Body of pancreas (tissue), 4 donors: ENCODE measurements at regions of chr1 and their contacts with region 1.

Region 1: DNA sequence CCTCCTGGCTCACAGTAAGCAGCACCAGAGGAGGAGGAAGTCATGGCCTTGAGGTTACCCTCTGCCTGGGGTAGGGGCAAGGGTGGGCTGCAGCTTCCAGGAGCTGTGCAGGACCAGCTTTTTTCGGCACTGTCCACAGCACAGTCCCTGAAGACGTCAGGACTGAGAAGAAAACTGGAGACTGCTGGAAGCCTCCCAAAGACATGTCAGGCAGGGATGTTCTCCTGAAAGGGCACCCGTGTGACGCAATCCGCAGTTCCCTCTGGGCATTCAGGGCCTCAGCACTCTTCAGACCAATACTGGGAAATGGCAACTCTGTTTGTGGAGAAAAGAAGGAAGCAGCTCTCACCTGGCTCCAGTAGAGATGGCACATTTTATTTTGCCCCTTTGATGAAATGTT is 64.8 kb upstream of the TENT5C start:
- DNase-seq: peak; percentile 49 to 71 (median 69)
- ATAC-seq: peak; percentile 63
- H3K4me3 ChIP-seq: no peak overlapping the region
- H3K27ac ChIP-seq: peak overlapping the region in 3 of 4 donors; percentile 42 to 52 (median 51)
- H3K4me1 ChIP-seq: peaks cover 32% of the 10 kb centered on the region
- H3K27me3 ChIP-seq: no peaks in the 10 kb centered on the region
- CTCF ChIP-seq: no peak
- POLR2A ChIP-seq: no peak

Region 2: DNA sequence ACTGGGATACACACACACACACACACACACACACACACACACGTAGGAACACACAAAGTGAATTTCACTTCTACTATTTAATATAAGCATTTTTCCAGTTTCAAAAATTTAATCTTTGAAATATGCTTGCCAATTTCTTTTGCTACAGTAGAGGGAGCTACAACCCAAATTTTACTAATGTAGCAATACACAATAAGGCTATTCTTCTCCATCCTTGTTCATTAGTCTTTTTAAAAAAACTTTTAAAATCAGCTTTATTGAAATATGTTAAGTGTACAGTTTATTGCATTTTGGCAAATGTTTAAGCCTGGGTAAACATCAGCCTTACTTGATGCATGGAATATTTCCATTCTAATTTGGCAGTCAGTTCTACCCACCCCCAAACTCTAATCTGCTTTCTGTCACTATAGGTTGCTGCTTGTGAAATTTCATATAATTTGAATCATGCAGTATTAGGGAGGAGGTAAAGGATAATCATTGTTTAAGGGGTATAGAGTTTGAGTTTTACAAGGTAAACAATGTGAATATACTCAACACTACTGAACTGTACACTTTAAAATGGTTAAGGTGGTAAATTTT is 28.2 kb before region 1 on chr1:
- intact Hi-C with region 1: no loop called
- DNase-seq: no peak
- ATAC-seq: peak; percentile 55
- H3K4me3 ChIP-seq: no peak overlapping the region
- H3K27ac ChIP-seq: no peak overlapping the region
- H3K4me1 ChIP-seq: no peaks in the 10 kb centered on the region
- H3K27me3 ChIP-seq: no peaks in the 10 kb centered on the region
- CTCF ChIP-seq: peak; percentile 12 to 83 (median 72)
- POLR2A ChIP-seq: no peak

Region 3: GRCh38 chr1:117664314-117664713 is 123.3 kb after region 1 on chr1:
- intact Hi-C with region 1: loop called (anchors 10 kb)
- DNase-seq: no peak
- ATAC-seq: no peak
- H3K4me3 ChIP-seq: no peak overlapping the region
- H3K27ac ChIP-seq: no peak overlapping the region
- H3K4me1 ChIP-seq: no peaks in the 10 kb centered on the region
- H3K27me3 ChIP-seq: no peaks in the 10 kb centered on the region
- CTCF ChIP-seq: no peak
- POLR2A ChIP-seq: no peak